Body of pancreas (tissue), 4 donors: ENCODE measurements at regions of chr11 and their contacts with region 1.

Region 1: GRCh38 chr11:12963792-12964536 is 45.2 kb upstream of the RASSF10 start:
- DNase-seq: peak; percentile 68 to 82 (median 76)
- ATAC-seq: peak; percentile 79
- H3K4me3 ChIP-seq: no peak overlapping the region
- H3K27ac ChIP-seq: no peak overlapping the region
- H3K4me1 ChIP-seq: peaks cover 8% of the 10 kb centered on the region
- H3K27me3 ChIP-seq: no peaks in the 10 kb centered on the region
- CTCF ChIP-seq: peak; percentile 65 to 91 (median 89)
- POLR2A ChIP-seq: no peak

Region 2: DNA sequence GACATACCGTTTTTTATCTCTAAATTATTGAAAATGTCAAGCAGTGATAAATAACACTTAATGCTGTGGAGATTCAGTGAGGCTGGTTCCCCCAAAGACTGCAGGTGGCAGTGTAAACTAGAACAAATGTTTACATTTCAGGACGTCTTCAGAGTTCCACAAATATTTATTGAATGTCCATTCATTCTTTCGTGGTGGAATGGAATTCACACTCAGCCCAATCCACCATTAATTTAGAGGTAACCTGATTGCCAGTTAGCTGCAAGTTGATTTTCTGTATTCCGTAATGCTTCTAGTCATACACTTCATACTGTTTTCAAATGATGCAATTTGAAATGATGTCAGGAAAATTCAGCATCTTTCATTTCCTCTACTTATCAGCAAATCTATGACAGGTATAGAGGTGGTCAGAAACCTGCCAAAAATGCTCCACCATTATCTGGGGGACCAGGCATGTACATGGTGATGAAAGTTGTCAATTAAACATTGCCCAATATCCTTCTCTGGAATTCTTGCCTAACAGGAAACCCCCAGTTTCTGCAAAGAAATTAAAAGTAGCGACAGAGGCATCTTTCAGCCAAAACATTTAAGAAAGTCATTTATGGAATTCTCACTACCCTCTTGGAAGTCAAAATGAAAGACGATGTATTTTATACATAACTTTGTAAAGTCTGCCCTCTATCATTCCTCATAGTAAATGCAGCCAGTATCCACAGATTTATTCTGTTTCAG is 219.3 kb after region 1 on chr11:
- intact Hi-C with region 1: loop called (anchors 5 kb)
- DNase-seq: no peak
- ATAC-seq: no peak
- H3K4me3 ChIP-seq: no peak overlapping the region
- H3K27ac ChIP-seq: no peak overlapping the region
- H3K4me1 ChIP-seq: no peaks in the 10 kb centered on the region
- H3K27me3 ChIP-seq: no peaks in the 10 kb centered on the region
- CTCF ChIP-seq: peak in 6 of 7 experiments; percentile 34 to 59 (median 54)
- POLR2A ChIP-seq: no peak